GM13977 (cell line): ENCODE measurements at regions of chr22 and their contacts with region 1.

Region 1: DNA sequence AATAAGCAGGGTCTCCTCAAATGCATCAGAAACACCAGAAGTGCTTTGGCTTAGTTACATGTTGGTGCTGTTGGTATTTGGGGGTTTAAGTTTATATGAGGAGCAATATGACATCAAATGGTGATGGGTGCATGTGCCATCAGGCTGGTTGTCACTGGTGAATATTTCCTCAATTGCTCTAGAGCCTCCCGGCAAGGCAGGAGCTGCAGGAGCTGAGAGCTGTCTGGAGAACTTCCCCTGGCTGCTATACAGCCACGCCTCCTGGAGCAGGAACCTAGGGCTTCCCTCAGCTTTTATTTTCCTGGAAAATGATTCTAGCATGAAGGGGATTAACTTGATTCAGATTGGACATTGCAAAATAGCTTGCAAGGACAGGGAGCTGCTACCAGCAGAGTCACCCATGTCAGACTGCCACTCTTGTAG is 15.8 kb downstream of the IGLL5 start:
- DNase-seq: no peak
- CTCF ChIP-seq: no peak

Region 2: DNA sequence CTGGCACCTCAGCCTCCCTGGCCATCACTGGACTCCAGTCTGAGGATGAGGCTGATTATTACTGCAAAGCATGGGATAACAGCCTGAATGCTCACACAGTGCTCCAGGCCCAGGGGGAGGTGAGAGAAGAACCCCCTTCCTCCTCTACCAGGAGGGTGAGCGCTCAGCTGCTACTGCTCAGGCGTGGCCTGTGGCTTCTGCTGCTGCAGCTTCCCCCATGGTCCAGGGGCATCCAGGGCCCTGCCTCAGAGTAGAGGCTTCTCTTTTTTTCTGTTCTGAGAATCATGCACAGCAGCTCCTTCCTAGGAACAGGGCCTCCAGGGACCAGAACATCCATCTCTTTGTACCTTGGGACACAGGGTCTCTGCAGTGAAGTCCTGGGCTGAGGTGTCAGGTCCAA is 575.6 kb before region 1 on chr22:
- in situ Hi-C with region 1: loop called (anchors 10 kb)
- DNase-seq: no peak
- CTCF ChIP-seq: no peak

Region 3: DNA sequence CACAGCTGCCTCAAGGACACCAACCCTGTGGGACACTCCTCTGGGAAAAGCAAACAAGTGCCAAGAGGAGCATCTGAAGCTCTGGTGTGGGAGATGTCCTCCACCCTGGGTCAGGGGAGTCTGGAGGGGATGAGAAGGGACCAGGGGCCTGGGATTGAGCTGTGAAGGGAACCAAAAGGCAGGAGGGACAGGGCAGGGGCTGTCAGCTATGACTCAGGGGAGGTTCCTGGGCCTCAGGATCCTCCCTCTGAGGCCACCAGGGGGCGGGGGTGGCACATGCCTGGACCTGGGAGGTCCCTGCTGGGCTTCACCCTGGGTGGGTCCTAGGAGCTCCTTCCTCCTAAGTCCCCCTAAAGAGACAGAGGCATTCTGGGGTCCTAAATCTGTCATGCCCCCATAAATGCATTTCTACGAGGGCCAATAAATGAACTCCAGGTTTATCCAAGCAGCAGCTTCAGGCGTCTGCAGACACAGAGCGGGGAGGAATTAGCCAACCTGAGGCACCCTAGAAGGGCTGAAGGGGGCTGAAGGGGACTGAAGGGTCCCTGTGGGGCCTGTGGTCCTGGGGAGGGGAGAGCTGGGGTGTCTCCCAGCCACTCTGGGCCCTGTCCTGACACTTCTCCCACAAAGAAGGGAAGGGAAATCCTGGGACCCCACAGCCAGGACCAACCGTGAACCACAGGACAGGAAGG is 47.6 kb before region 1 on chr22:
- in situ Hi-C with region 1: no loop called
- DNase-seq: peak; percentile 32
- CTCF ChIP-seq: peak; percentile 33

Region 4: DNA sequence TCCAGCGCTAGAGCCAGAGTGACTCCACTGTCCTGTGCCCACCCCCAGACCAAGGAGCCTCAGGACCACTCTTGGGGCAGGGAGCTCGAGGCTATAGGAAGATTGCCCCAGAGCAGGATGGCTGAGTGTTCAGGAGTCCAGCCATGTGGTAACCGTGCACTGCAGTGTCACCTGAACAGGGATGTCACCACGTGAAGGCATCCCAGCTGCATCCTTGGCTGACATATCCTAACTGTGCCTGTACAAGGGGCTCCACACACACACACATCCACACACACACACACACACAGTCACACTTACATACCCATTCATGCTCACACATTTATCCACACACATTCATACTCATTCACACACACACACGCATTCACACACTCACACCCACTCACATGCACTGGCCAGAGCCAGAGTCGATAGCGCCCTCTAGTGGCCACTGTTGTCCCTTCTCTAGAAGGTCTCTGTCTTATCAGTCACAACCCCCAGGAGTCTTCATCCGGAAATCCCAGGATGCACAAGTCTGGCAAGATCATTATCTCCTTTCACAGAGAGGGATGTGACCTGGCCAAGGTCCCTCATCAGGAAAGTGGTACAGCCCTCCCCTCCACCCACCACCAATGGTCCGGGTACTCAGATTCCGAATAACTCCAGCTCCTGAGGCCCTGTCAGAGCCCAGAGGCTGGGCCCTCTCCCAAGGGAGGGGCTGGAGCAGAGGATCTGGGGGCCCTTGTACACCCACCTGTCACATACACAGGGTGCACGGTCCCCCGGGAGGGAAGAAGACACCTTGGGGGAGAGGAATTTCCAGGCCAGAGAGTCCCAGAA is 39.4 kb after region 1 on chr22:
- in situ Hi-C with region 1: loop called (anchors 5 kb)
- DNase-seq: peak; percentile 74
- CTCF ChIP-seq: peak; percentile 91

Region 5: DNA sequence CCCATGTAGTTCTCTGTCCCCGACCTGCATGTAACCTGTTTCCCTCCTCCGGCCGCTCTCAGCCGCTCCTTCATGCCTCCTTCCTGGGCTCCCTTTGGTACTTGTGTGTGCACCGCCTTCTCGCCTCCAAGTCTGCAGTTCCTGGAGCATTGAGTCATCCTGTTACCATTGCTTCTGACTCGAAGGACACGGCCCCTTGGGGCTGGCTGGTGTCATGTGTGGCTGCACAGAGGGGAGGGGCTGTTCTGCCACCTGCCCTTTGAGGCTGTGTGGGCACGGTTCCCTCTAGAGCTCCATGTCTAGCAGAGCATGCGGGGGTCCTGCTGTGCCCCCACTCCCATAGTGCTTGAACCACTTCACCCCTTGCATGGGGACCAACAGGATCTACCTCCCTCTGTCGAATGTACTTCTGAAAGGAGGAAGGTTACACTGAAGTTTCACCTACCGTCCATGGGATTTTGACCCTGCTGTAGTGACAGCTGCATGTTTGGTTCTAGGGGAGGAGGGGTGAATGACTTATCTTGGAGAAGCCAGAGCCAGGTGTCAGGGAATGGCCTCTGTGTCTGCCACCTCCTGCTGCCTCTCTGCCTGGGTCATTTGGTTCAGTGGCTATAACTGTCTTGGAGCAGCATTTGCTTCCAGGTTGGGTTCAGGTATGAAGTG is 316.6 kb after region 1 on chr22:
- in situ Hi-C with region 1: no loop called
- DNase-seq: peak; percentile 56
- CTCF ChIP-seq: no peak